Cardiac septum (tissue), 1 donor: ENCODE measurements at regions of chr7 and their contacts with region 1.

Region 1: GRCh38 chr7:12686894-12687717 is at the start of gene ARL4A:
- DNase-seq: peak; percentile 99
- total RNA-seq, gene ARL4A: 17.7 TPM

Region 2: GRCh38 chr7:12594056-12594455 is 93.0 kb before region 1 on chr7:
- intact Hi-C with region 1: no loop called
- DNase-seq: no peak

Region 3: GRCh38 chr7:12715372-12716133 is 28.4 kb after region 1 on chr7:
- intact Hi-C with region 1: no loop called
- DNase-seq: peak; percentile 84

Region 4: GRCh38 chr7:12771378-12771877 is 84.3 kb after region 1 on chr7:
- intact Hi-C with region 1: loop called (anchors 5 kb)
- DNase-seq: no peak

Region 5: GRCh38 chr7:13032576-13032975 is 345.5 kb after region 1 on chr7:
- intact Hi-C with region 1: loop called (anchors 10 kb)
- DNase-seq: no peak

Region 6: DNA sequence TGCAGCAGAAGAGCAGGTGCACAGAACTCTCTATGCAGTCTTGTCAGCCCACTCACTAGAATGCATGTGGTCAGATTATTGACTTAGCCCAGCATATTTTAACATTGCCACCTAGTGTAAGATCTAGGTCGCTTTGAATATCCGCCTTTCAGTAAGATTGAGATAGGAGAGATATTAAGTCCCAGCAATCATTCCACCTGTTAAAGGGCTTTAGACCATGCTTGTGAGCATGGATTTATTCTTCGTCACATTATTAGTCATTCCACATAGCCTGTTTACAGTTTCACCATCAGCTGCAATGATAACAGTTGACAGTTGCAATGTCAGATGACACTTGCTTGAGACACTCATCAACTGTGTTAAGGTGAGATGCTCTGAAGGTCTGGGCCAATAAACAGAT is 492.0 kb after region 1 on chr7:
- intact Hi-C with region 1: loop called (anchors 10 kb)
- DNase-seq: no peak